Activated CD8-positive, alpha-beta T cell treated with anti-CD3 and anti-CD28 coated beads, Interleukin-2, amount 10 ng/mL, durations not matched to agents 7 days and 5 days (primary cell): ENCODE measurements at regions of chr5 and their contacts with region 1.

Region 1: GRCh38 chr5:112995764-112996618 is 19.4 kb downstream of the DCP2 start:
- DNase-seq: peak; percentile 82
- ATAC-seq: peak; percentile 82
- H3K4me3 Mint-ChIP-seq: no peak overlapping the region
- H3K27ac Mint-ChIP-seq: no peak overlapping the region
- H3K4me1 Mint-ChIP-seq: peaks cover 19% of the 10 kb centered on the region
- H3K27me3 Mint-ChIP-seq: no peaks in the 10 kb centered on the region

Region 2: GRCh38 chr5:112833971-112834370 is 162.0 kb before region 1 on chr5:
- CTCF ChIA-PET with region 1: no interaction called
- POLR2A ChIA-PET with region 1: no interaction called
- DNase-seq: no peak
- ATAC-seq: no peak
- H3K4me3 Mint-ChIP-seq: no peak overlapping the region
- H3K27ac Mint-ChIP-seq: no peak overlapping the region
- H3K4me1 Mint-ChIP-seq: peaks cover 2% of the 10 kb centered on the region
- H3K27me3 Mint-ChIP-seq: no peaks in the 10 kb centered on the region

Region 3: DNA sequence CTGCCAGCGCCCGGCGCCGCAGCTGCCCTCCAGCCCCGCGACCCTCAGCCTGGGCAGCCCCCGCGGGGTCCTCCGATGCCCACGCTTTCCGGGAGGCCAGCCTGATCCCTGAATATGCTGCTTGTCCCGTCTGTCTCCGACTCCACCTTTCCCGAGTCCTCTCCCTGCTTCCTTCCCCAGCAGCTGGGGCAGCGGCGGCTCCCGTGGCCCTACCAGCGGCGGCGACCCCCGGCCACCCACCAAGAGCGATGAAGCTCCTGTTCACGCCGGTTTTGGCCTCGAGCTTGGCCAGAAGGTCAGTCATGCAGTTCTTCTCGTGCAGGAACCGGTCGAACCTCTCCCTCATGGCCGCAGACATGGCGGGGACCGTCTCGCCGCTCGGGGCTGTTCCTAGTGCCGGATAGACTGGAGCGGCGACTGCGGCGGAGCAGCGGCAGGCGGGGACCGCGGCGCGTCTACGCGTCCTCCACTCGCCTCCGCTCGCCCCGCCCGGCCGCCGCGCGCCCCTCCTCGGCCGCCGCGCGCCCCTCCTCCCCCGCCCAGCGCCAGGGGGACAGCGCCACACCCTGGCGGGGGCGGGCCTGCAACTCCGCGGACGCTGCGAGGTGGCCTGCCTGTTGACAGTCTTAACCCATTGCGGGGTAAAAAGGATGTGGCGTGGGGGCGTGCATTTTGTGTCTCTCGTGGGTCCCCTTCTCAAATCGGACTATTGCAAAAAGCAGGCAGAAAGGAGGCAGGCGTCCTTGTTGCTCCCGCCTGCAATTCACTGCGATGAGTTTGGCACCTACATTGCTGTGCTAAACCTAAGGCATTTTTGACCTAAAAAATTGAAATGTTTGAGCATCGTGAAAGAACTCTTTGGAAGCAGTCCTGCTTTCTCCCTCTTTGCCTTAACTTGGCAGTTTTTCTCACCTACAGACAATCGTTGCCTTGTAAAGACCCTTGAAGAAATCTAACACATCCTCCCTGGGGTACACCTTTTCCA is 73.9 kb before region 1 on chr5 and contains the start of gene REEP5:
- CTCF ChIA-PET with region 1: interaction called, 10 read pairs
- POLR2A ChIA-PET with region 1: no interaction called
- DNase-seq: peak; percentile 88
- ATAC-seq: peak; percentile 84
- H3K4me3 Mint-ChIP-seq: peak within 1 kb of the TSS; percentile 95
- H3K27ac Mint-ChIP-seq: peak within 1 kb of the TSS; percentile 97
- H3K4me1 Mint-ChIP-seq: peaks cover 70% of the 10 kb centered on the region
- H3K27me3 Mint-ChIP-seq: no peaks in the 10 kb centered on the region
- total RNA-seq, gene REEP5: 77.6 to 85.0 TPM

Region 4: GRCh38 chr5:112940670-112941069 is 55.3 kb before region 1 on chr5:
- CTCF ChIA-PET with region 1: no interaction called
- POLR2A ChIA-PET with region 1: no interaction called
- DNase-seq: no peak
- ATAC-seq: no peak
- H3K4me3 Mint-ChIP-seq: no peak overlapping the region
- H3K27ac Mint-ChIP-seq: no peak overlapping the region
- H3K4me1 Mint-ChIP-seq: peaks cover 6% of the 10 kb centered on the region
- H3K27me3 Mint-ChIP-seq: peaks cover 9% of the 10 kb centered on the region

Region 5: DNA sequence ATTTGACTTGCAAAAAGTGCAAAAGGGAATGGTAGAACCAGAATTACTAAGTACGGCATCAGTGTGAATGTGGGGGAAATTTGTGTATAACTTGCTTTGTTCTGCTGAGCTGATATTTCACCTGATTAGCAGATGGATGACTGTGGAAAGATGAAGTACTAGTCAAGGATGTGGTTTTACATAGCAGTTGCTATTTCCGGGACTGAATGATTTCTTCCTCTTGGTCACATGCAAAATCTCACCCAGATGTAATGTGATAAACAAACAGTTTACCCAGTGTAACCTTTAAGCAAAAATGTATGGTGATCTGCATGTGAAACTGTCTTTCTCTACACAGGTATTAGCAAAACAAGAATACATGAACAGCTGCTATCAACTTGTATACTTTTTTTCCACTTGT is 26.7 kb after region 1 on chr5:
- CTCF ChIA-PET with region 1: interaction called, 83 read pairs
- POLR2A ChIA-PET with region 1: no interaction called
- DNase-seq: peak; percentile 39
- ATAC-seq: peak; percentile 91
- H3K4me3 Mint-ChIP-seq: peak overlapping the region; percentile 55
- H3K27ac Mint-ChIP-seq: peak overlapping the region; percentile 84
- H3K4me1 Mint-ChIP-seq: peaks cover 64% of the 10 kb centered on the region
- H3K27me3 Mint-ChIP-seq: no peaks in the 10 kb centered on the region

Region 6: DNA sequence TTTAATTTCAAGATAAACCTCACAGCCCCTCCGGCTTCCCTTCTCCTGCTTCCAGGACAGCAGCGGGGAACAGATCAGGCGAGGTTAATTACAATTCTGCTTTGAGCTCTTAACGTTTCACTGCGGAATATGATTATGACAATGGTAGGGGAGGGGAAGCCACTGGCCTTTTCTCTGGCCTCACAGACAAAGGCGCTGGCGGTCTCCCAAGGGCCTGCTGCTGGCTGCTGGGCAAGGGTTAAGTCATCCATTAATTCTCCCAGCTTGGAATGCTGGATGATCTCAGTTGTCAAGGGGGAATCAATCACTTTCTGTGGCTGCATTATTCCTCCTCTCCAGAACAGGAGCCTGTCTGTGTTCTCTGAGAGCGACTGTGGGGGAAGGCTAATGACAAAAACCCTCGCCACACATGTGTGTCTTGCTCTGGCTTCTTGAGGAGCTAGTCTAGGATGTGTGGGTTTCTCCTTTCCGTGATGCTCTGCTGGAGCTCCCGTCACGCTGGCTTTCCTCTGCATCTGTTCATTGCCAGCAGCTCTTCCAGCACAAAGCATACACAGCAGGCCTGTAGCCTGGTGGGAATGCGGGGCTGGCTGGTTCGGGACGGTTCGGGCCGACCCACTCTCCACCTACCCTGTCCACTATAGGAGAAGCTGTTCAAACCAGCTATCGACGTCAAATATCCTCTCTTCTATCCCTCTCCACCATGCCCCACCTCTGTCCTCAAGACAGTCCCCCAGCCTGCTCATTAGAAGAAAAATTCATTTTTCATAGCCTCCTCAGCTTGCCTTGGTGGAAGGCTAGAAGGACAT is 63.4 kb after region 1 on chr5:
- CTCF ChIA-PET with region 1: interaction called, 11 read pairs
- POLR2A ChIA-PET with region 1: no interaction called
- DNase-seq: no peak
- ATAC-seq: no peak
- H3K4me3 Mint-ChIP-seq: no peak overlapping the region
- H3K27ac Mint-ChIP-seq: peak overlapping the region; percentile 28
- H3K4me1 Mint-ChIP-seq: peaks cover 42% of the 10 kb centered on the region
- H3K27me3 Mint-ChIP-seq: no peaks in the 10 kb centered on the region

Region 7: DNA sequence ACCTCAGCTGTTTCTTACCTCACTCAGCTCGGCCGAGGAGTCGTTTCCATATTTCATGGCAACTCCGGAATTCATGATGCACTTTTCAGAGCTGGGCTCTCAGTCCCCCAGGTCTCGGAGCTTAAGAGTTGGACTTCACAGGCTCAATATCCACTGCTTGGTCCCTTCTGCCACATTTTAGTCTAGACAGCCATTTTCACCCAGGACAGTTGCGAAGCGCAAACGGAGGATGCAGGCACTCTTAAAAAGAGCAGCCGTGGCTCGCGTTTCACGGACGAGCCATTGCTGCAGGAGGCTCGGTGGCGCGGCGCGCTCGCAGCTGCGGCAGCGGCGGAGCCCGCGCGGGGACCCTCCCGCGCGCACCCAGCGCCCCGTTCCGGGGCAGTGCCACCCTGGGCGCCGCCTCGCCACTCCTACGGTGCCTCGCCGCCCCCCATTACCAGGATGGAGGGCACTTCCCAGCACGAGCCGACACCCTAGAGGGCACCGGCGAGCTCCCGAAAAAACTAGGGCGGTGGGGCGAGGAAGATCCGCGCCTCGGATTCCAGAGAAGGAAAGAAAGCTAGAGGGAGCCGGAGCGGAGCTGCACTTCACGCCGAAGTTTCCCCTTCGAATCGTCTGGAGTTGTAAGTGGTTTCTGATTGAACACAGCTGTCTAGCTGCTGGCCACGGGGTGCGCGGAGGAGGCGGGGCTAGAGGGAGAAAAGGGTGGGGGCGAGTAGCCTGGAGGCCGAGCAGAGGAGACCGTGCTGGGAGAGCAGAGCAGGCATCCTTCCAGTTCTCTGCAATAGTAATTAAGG is 298.5 kb after region 1 on chr5:
- CTCF ChIA-PET with region 1: interaction called, 25 read pairs
- POLR2A ChIA-PET with region 1: no interaction called
- DNase-seq: peak; percentile 87
- ATAC-seq: peak; percentile 92
- H3K4me3 Mint-ChIP-seq: peak overlapping the region; percentile 90
- H3K27ac Mint-ChIP-seq: peak overlapping the region; percentile 83
- H3K4me1 Mint-ChIP-seq: peaks cover 17% of the 10 kb centered on the region
- H3K27me3 Mint-ChIP-seq: peaks cover 43% of the 10 kb centered on the region

Region 8: GRCh38 chr5:113513384-113514288 is 517.6 kb after region 1 on chr5 and contains the start of gene YTHDC2:
- CTCF ChIA-PET with region 1: interaction called, 20 read pairs
- POLR2A ChIA-PET with region 1: no interaction called
- DNase-seq: peak; percentile 90
- ATAC-seq: peak; percentile 94
- H3K4me3 Mint-ChIP-seq: peak within 1 kb of the TSS; percentile 92
- H3K27ac Mint-ChIP-seq: peak within 1 kb of the TSS; percentile 92
- H3K4me1 Mint-ChIP-seq: peaks cover 39% of the 10 kb centered on the region
- H3K27me3 Mint-ChIP-seq: peaks cover 16% of the 10 kb centered on the region
- total RNA-seq, gene YTHDC2: 30.3 to 34.1 TPM